Psoas muscle (tissue), 8 donors: ENCODE measurements at regions of chr16 and their contacts with region 1.

Region 1: GRCh38 chr16:31713071-31713944 is 160.3 kb upstream of the ZNF267 start:
- DNase-seq: peak; percentile 94 to 95
- ATAC-seq: peak; percentile 92 to 98 (median 97)
- H3K4me3 ChIP-seq: peak overlapping the region; percentile 91
- H3K27ac ChIP-seq: peak overlapping the region; percentile 95
- H3K4me1 ChIP-seq: peaks cover 11% of the 10 kb centered on the region
- H3K27me3 ChIP-seq: no peaks in the 10 kb centered on the region
- CTCF ChIP-seq: no peak

Region 2: DNA sequence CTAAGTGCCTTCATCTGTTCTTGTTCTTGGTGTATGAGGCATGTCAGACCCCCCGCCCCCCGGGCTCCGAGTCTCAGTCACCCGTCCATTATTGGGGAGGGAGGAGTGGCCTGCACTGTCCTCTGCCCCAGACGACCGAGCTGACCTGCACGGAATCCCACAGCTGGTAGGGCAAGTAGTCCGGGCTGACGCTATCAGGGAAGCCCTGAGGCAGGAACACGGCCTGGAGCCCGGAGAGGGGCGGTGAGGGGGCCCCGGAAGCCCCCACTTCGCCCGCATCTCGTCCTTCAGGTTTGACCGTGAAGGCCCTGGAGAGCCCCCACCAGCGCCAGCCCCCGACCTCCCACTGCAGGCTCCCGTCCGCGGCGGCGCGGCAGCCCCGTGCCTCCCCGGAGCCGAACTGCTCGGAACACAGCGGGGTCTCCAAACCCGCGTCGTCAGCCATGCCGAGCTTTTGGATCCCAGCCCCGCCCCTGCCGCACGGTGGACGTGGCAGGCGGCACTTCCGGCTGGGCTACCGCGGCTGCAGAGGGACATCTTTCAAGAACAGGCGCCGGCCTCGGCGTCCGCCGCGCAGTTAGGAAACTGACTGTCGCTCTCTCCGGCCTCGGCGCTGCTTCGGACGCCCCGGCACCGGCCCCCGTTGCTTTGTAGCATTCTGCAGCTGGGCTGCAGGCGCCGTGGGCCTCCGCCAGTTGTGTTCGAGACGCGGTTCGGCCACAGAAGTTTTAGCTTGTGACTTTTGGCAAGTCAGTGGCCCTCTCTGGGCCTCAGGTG is 205.2 kb before region 1 on chr16 and contains the start of gene RUSF1:
- intact Hi-C with region 1: loop called (anchors 5 to 10 kb)
- DNase-seq: peak; percentile 92 to 96
- ATAC-seq: peak; percentile 97 to 99 (median 98)
- H3K4me3 ChIP-seq: peak within 1 kb of the TSS; percentile 92
- H3K27ac ChIP-seq: peak within 1 kb of the TSS; percentile 96
- H3K4me1 ChIP-seq: peaks cover 21% of the 10 kb centered on the region
- H3K27me3 ChIP-seq: no peaks in the 10 kb centered on the region
- CTCF ChIP-seq: no peak
- total RNA-seq, gene RUSF1: 6.9 to 16.2 (median 11.9) TPM

Region 3: GRCh38 chr16:31513126-31513525 is 200.2 kb before region 1 on chr16:
- intact Hi-C with region 1: loop called (anchors 5 to 10 kb)
- DNase-seq: no peak
- ATAC-seq: no peak
- H3K4me3 ChIP-seq: no peak overlapping the region
- H3K27ac ChIP-seq: no peak overlapping the region
- H3K4me1 ChIP-seq: peaks cover 4% of the 10 kb centered on the region
- H3K27me3 ChIP-seq: no peaks in the 10 kb centered on the region
- CTCF ChIP-seq: no peak

Region 4: GRCh38 chr16:31727553-31727952 is 14.2 kb after region 1 on chr16:
- intact Hi-C with region 1: no loop called
- DNase-seq: no peak
- ATAC-seq: no peak
- H3K4me3 ChIP-seq: no peak overlapping the region
- H3K27ac ChIP-seq: no peak overlapping the region
- H3K4me1 ChIP-seq: no peaks in the 10 kb centered on the region
- H3K27me3 ChIP-seq: no peaks in the 10 kb centered on the region
- CTCF ChIP-seq: no peak

Region 5: GRCh38 chr16:31842864-31843263 is 129.6 kb after region 1 on chr16:
- intact Hi-C with region 1: no loop called
- DNase-seq: no peak
- ATAC-seq: no peak
- H3K4me3 ChIP-seq: no peak overlapping the region
- H3K27ac ChIP-seq: no peak overlapping the region
- H3K4me1 ChIP-seq: no peaks in the 10 kb centered on the region
- H3K27me3 ChIP-seq: no peaks in the 10 kb centered on the region
- CTCF ChIP-seq: no peak

Region 6: GRCh38 chr16:31868691-31869167 is 155.4 kb after region 1 on chr16:
- intact Hi-C with region 1: loop called in 1 of 2 experiments (anchors 5 kb)
- DNase-seq: peak; percentile 71 to 83
- ATAC-seq: peak; percentile 61 to 78 (median 66)
- H3K4me3 ChIP-seq: no peak overlapping the region
- H3K27ac ChIP-seq: no peak overlapping the region
- H3K4me1 ChIP-seq: no peaks in the 10 kb centered on the region
- H3K27me3 ChIP-seq: no peaks in the 10 kb centered on the region
- CTCF ChIP-seq: peak; percentile 88